ENCODE measurements at regions of chr6 and their contacts with region 1.

Region 1: DNA sequence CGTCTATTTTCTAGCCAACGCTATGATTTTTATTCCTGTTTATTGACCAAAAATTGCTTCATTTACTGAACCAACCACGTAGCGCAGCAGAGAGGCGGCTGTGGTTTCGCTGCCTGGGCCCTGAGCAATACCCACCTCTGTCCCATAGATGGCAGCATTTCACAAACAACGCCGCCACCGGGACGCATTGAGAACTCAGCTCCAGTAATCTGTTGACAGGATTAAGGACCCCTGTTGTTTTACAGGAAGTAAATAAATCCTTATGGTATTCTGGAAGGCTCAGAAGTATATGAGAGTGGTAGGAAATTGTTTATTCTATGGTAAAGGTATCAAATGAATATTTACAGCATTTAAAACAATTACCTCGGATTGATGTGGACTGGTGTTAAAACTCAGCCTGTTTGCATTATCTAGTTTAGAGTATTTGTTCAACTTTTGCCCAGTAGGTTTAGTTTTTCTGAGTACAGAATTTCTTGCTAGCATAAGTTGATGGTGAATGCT is 547.9 kb upstream of the SLC35B3 start:
- DNase-seq: peak; percentile 53
- ATAC-seq: peak; percentile 100
- H3K4me3 ChIP-seq: no peak overlapping the region
- H3K27ac ChIP-seq: no peak overlapping the region
- H3K4me1 ChIP-seq: no peaks in the 10 kb centered on the region
- H3K27me3 ChIP-seq: no peaks in the 10 kb centered on the region
- CTCF ChIP-seq: peak; percentile 96
- POLR2A ChIP-seq: no peak
- RAD21 ChIP-seq: peak; percentile 94

Region 2: GRCh38 chr6:8131256-8131897 is 851.9 kb before region 1 on chr6:
- CTCF ChIA-PET with region 1: no interaction called
- POLR2A ChIA-PET with region 1: no interaction called
- dilution Hi-C with region 1: no loop called
- in situ Hi-C with region 1: no loop called
- intact Hi-C with region 1: loop called (anchors 1 kb)
- DNase-seq: peak; percentile 70
- ATAC-seq: peak; percentile 96
- H3K4me3 ChIP-seq: no peak overlapping the region
- H3K27ac ChIP-seq: no peak overlapping the region
- H3K4me1 ChIP-seq: no peaks in the 10 kb centered on the region
- H3K27me3 ChIP-seq: no peaks in the 10 kb centered on the region
- CTCF ChIP-seq: peak; percentile 87
- POLR2A ChIP-seq: 0 out of 2 replicates have a peak, but pooled peaks have one; percentile 55
- RAD21 ChIP-seq: peak; percentile 96

Region 3: GRCh38 chr6:9250852-9251251 is 267.6 kb after region 1 on chr6:
- CTCF ChIA-PET with region 1: no interaction called
- POLR2A ChIA-PET with region 1: no interaction called
- dilution Hi-C with region 1: no loop called
- in situ Hi-C with region 1: no loop called
- intact Hi-C with region 1: loop called (anchors 5 kb)
- DNase-seq: peak; percentile 53
- ATAC-seq: peak; percentile 59
- H3K4me3 ChIP-seq: no peak overlapping the region
- H3K27ac ChIP-seq: no peak overlapping the region
- H3K4me1 ChIP-seq: no peaks in the 10 kb centered on the region
- H3K27me3 ChIP-seq: no peaks in the 10 kb centered on the region
- CTCF ChIP-seq: peak; percentile 55
- POLR2A ChIP-seq: no peak
- RAD21 ChIP-seq: peak; percentile 80

Region 4: DNA sequence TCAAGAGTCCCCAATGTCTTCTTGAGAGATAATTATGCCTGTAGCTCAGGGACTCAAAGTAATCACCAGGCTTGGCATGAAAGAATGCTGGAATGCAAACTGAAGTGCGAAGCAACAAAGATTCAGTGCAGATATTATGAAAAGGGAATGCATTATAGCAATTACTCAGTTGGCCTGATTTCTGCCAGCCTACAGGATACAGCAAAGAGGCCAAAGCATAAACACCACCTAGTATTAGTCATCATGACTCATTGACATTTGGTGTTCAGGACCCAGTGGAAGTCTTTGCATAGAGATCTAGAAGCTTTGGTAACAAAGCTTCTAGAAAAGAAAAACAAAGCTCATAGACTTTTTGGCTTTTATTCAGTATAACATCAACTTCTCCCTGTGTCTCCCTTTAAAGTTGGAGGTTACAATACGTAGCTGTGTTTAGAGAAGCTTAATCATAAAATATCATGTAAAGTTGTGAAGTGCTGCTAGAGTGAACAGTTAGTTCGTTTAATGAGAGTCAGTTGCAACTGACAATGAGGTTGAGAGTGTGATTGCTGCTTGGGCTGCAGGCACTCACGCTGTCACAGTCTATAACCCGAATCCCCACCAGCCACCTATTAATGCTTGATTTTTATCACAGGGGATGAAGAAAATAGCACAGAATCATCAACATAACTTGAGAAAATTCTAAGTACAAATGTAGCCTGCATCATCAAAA is 498.9 kb after region 1 on chr6:
- CTCF ChIA-PET with region 1: no interaction called
- POLR2A ChIA-PET with region 1: no interaction called
- dilution Hi-C with region 1: no loop called
- in situ Hi-C with region 1: no loop called
- intact Hi-C with region 1: loop called (anchors 5 kb)
- DNase-seq: peak; percentile 96
- ATAC-seq: peak; percentile 89
- H3K4me3 ChIP-seq: no peak overlapping the region
- H3K27ac ChIP-seq: peak overlapping the region; percentile 58; the same call in 1 of the 2 replicates
- H3K4me1 ChIP-seq: peaks cover 11% of the 10 kb centered on the region
- H3K27me3 ChIP-seq: no peaks in the 10 kb centered on the region
- CTCF ChIP-seq: no peak
- POLR2A ChIP-seq: no peak
- RAD21 ChIP-seq: no peak

Region 5: DNA sequence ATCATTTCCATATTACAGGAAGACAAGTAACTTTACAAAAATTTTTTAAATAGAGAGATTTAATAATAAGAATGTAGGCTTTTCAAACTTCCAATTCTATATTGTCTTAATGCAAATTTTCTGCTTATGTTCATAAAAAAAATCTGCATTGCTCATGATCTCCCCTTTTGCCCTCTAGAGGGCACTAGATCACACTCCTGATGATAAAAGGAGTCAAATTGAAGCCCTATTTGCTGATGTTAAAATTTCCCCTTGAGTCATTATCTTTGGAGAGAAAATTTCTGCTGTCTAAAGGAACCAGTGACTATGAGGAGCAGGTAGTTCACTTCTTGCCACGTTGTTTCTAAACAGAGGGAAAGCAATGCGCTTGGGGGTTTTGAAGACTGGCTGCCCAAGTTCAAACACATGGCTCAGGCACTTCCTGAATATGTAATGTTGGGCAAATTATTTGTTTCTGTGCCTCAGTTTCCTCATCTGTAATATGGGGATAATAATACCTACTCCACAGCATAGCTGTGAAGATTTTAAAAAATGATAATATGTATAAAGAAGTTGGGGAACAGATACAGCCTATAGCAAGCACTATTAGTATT is 557.4 kb after region 1 on chr6:
- CTCF ChIA-PET with region 1: interaction called, 3 read pairs
- POLR2A ChIA-PET with region 1: no interaction called
- dilution Hi-C with region 1: no loop called
- in situ Hi-C with region 1: loop called (anchors 25 kb)
- intact Hi-C with region 1: no loop called
- DNase-seq: peak; percentile 67
- ATAC-seq: peak; percentile 62
- H3K4me3 ChIP-seq: no peak overlapping the region
- H3K27ac ChIP-seq: no peak overlapping the region
- H3K4me1 ChIP-seq: no peaks in the 10 kb centered on the region
- H3K27me3 ChIP-seq: no peaks in the 10 kb centered on the region
- CTCF ChIP-seq: peak; percentile 66
- POLR2A ChIP-seq: no peak
- RAD21 ChIP-seq: peak; percentile 67

Region 6: GRCh38 chr6:9675122-9675521 is 691.9 kb after region 1 on chr6:
- CTCF ChIA-PET with region 1: no interaction called
- POLR2A ChIA-PET with region 1: no interaction called
- dilution Hi-C with region 1: no loop called
- in situ Hi-C with region 1: no loop called
- intact Hi-C with region 1: loop called (anchors 10 kb)
- DNase-seq: no peak
- ATAC-seq: no peak
- H3K4me3 ChIP-seq: no peak overlapping the region
- H3K27ac ChIP-seq: no peak overlapping the region
- H3K4me1 ChIP-seq: no peaks in the 10 kb centered on the region
- H3K27me3 ChIP-seq: no peaks in the 10 kb centered on the region
- CTCF ChIP-seq: no peak
- POLR2A ChIP-seq: no peak
- RAD21 ChIP-seq: no peak

Region 7: GRCh38 chr6:10429638-10430427 is 1446.6 kb after region 1 on chr6:
- CTCF ChIA-PET with region 1: interaction called, 3 read pairs
- POLR2A ChIA-PET with region 1: no interaction called
- dilution Hi-C with region 1: no loop called
- in situ Hi-C with region 1: loop called (anchors 5 kb)
- intact Hi-C with region 1: loop called (anchors 1 kb)
- DNase-seq: peak; percentile 52
- ATAC-seq: peak; percentile 54; the same call in 1 of the 2 replicates
- H3K4me3 ChIP-seq: no peak overlapping the region
- H3K27ac ChIP-seq: no peak overlapping the region
- H3K4me1 ChIP-seq: no peaks in the 10 kb centered on the region
- H3K27me3 ChIP-seq: peaks cover 12% of the 10 kb centered on the region
- CTCF ChIP-seq: peak; percentile 58
- POLR2A ChIP-seq: no peak
- RAD21 ChIP-seq: peak; percentile 80